Prostate gland (tissue), 2 donors: ENCODE measurements at regions of chr2 and their contacts with region 1.

Region 1: DNA sequence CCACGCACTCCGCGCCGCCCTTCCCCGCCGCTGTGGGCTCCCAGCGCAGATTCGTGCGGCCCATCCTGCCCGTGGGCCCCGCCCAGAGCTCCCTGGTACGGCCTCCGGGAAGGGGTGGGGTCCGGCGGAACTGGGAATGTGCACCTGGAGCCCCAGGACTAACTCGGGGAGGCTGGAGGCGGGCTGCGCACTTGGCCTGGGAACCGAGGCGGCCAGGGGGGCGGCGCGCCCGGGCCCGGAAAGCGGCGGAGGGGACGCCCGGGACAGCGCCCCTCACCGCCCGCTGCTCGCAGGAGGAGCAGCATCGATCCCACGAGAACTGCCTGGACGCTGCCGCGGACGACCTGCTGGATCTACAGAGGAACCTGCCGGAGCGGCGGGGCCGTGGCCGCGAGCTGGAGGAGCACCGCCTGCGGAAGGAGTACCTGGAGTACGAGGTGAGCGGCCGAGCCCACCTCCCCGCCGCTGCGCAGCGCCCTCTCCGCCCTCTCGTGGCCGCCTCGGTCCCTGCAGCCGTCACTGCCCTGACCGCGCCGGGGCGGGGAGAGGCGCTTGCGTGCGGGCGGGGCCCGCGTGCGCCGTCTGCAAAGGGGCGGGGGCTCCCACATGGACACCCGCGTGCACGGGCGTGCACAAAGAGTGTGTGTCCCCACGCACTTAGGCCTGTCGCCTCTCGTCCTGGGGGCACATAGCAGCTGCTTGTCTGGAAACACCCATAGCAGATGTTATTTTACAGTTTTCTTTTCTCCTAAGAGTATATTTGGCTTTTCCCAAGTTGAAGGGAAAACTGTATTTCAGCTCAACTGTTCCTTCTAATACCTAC is 25.2 kb downstream of the PSD4 start:
- DNase-seq: peak; percentile 76
- H3K4me3 ChIP-seq: peak overlapping the region; percentile 45 to 56
- H3K27ac ChIP-seq: peak overlapping the region; percentile 84 to 89
- H3K4me1 ChIP-seq: peaks cover 3% of the 10 kb centered on the region
- H3K27me3 ChIP-seq: no peaks in the 10 kb centered on the region
- CTCF ChIP-seq: peak; percentile 77 to 98 (median 96)
- POLR2A ChIP-seq: peak; percentile 33

Region 2: DNA sequence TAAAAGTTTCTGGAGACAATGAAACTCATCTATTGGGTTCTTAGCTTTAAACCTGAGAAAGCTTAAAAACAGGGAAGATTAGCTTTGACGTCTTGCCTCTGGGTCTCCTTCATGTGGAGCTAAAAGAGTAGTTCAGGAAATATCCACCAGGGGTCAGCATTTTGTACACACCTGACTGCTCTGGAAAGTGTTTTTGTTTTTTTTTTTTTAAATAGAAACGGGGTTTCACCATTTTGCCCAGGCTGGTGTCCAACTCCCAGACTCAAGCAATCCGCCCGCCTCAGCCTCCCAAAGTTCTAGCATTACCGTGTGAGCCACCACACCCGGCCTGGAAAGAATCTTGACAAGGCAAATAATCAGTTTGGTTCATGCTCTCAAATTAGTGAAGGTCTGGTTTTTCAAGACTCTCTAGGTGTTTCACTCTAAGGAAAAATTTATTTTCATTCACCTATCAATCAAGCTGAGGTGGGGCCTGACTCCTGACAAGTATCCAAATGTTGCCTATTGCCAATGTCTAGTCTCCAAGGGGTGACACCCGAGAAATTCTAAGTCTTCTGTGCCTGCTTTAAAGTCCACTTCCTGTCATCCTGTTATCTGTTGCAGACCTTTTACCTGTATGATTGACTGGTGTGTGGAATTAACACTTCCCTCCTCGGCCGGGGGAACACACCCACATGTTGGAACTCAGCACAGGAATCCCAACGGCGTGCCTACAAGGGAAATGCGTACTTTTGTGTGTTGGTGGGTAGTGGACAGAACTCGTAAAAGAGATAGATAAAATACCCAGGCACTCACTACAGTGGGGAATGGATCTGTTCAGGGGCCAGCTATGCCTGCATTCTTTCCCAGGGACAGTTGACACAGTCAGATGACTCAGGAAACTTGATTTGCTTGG is 60.3 kb before region 1 on chr2:
- intact Hi-C with region 1: loop called (anchors 5 kb)
- DNase-seq: peak; percentile 75
- H3K4me3 ChIP-seq: no peak overlapping the region
- H3K27ac ChIP-seq: peak overlapping the region; percentile 17 to 36
- H3K4me1 ChIP-seq: no peaks in the 10 kb centered on the region
- H3K27me3 ChIP-seq: no peaks in the 10 kb centered on the region
- CTCF ChIP-seq: peak; percentile 75 to 85 (median 77)
- POLR2A ChIP-seq: no peak

Region 3: GRCh38 chr2:113248997-113249770 is 50.2 kb after region 1 on chr2:
- intact Hi-C with region 1: loop called (anchors 5 kb)
- DNase-seq: peak; percentile 75
- H3K4me3 ChIP-seq: no peak overlapping the region
- H3K27ac ChIP-seq: no peak overlapping the region
- H3K4me1 ChIP-seq: no peaks in the 10 kb centered on the region
- H3K27me3 ChIP-seq: no peaks in the 10 kb centered on the region
- CTCF ChIP-seq: peak; percentile 75 to 92 (median 88)
- POLR2A ChIP-seq: no peak